ENCODE measurements at regions of chr9 and their contacts with region 1.

Region 1: GRCh38 chr9:69190086-69190862 is 16.2 kb downstream of the TJP2 start:
- DNase-seq: no peak
- H3K4me3 ChIP-seq: no peak overlapping the region
- H3K27ac ChIP-seq: no peak overlapping the region
- H3K4me1 ChIP-seq: peaks cover 0 to 33% of the 10 kb centered on the region in 2 donors
- H3K27me3 ChIP-seq: no peaks in the 10 kb centered on the region
- CTCF ChIP-seq: no peak
- POLR2A ChIP-seq: no peak

Region 2: DNA sequence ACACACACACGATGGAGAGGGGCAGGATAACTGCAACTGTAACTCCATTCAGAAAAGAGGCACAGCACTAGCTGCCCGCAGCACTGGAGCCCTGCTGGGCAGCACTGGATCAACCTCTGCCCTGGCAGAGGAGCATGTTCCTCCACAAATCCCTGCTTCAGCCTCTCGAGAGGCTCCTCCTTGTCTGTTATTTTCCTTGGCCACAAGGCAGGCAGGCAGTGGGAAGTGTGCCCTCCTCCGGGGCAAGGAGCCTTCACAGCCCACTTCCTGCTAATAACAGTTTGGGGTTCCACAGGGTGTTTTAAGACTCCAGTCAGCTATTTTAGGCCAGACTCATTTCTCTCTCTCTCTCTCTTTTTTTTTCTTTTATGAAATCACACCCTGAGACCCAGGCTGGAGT is 142.9 kb before region 1 on chr9:
- intact Hi-C with region 1: loop called (anchors 2 to 5 kb)
- DNase-seq: no peak
- H3K4me3 ChIP-seq: no peak overlapping the region
- H3K27ac ChIP-seq: no peak overlapping the region
- H3K4me1 ChIP-seq: peaks cover 17 to 19% of the 10 kb centered on the region in 2 donors
- H3K27me3 ChIP-seq: no peaks in the 10 kb centered on the region
- CTCF ChIP-seq: no peak
- POLR2A ChIP-seq: no peak

Region 3: DNA sequence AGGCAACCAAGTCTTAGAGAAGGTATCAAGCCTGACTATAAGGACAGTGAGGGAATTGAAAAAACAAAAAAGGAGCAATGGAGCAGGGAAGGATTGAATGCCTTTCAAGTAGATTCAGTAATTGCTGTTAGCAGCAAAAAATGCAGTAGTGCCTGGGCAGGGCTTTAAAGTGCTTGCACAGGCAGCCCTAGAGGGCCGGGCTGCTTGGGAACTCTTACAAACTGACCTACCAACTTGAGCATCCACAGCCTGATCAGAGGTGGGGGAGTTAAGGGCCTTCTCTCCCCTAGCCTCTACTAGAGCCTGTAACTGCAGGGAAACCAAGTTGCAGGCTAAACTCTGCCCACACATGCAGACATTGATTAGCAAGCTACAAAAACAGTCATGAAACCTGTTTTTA is 135.3 kb before region 1 on chr9:
- intact Hi-C with region 1: loop called (anchors 2 to 5 kb)
- DNase-seq: no peak
- H3K4me3 ChIP-seq: no peak overlapping the region
- H3K27ac ChIP-seq: no peak overlapping the region
- H3K4me1 ChIP-seq: peaks cover 4 to 6% of the 10 kb centered on the region in 2 donors
- H3K27me3 ChIP-seq: no peaks in the 10 kb centered on the region
- CTCF ChIP-seq: no peak
- POLR2A ChIP-seq: no peak

Region 4: DNA sequence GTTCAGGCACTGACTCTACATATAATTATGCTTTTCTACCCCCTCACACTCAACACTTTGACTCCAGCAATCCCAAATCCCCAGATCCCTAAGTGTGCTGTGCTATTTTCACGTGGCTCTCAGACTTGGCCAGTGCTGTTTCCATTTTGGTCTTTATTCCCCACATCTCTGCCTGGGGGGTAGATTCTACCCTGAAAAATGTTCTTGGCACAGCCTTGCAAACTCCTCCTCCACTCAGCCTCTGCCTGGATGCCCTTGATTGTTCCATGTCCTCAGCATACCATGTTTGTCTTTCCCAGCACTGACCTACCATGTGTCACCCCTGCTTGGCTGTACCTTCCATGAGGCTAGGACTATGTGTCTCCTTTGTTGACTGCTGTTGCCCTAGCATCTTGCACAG is 111.7 kb before region 1 on chr9:
- intact Hi-C with region 1: no loop called
- DNase-seq: peak in 2 of 7 donors; percentile 24 to 57
- H3K4me3 ChIP-seq: no peak overlapping the region
- H3K27ac ChIP-seq: peak overlapping the region in 1 of 5 donors; percentile 18
- H3K4me1 ChIP-seq: no peaks in the 10 kb centered on the region
- H3K27me3 ChIP-seq: no peaks in the 10 kb centered on the region
- CTCF ChIP-seq: no peak
- POLR2A ChIP-seq: no peak